Natural killer cell (primary cell): ENCODE measurements at regions of chr5 and their contacts with region 1.

Region 1: GRCh38 chr5:122327104-122327503 is 15.1 kb downstream of the SNCAIP start:
- DNase-seq: no peak
- ATAC-seq: no peak
- H3K4me3 ChIP-seq: no peak overlapping the region
- H3K4me3 Mint-ChIP-seq: no peak overlapping the region
- H3K27ac ChIP-seq: no peak overlapping the region
- H3K27ac Mint-ChIP-seq: no peak overlapping the region
- H3K4me1 ChIP-seq: no peaks in the 10 kb centered on the region
- H3K4me1 Mint-ChIP-seq: no peaks in the 10 kb centered on the region
- H3K27me3 ChIP-seq: no peaks in the 10 kb centered on the region
- H3K27me3 Mint-ChIP-seq: no peaks in the 10 kb centered on the region
- CTCF ChIP-seq: no peak

Region 2: GRCh38 chr5:122142480-122143164 is 184.5 kb before region 1 on chr5:
- intact Hi-C with region 1: no loop called
- DNase-seq: no peak
- ATAC-seq: no peak
- H3K4me3 ChIP-seq: no peak overlapping the region
- H3K4me3 Mint-ChIP-seq: no peak overlapping the region
- H3K27ac ChIP-seq: no peak overlapping the region
- H3K27ac Mint-ChIP-seq: no peak overlapping the region
- H3K4me1 ChIP-seq: no peaks in the 10 kb centered on the region
- H3K4me1 Mint-ChIP-seq: no peaks in the 10 kb centered on the region
- H3K27me3 ChIP-seq: no peaks in the 10 kb centered on the region
- H3K27me3 Mint-ChIP-seq: no peaks in the 10 kb centered on the region
- CTCF ChIP-seq: no peak

Region 3: GRCh38 chr5:122297587-122298298 is 29.4 kb before region 1 on chr5:
- intact Hi-C with region 1: loop called (anchors 2 kb)
- DNase-seq: no peak
- ATAC-seq: no peak
- H3K4me3 ChIP-seq: no peak overlapping the region
- H3K4me3 Mint-ChIP-seq: no peak overlapping the region
- H3K27ac ChIP-seq: no peak overlapping the region
- H3K27ac Mint-ChIP-seq: no peak overlapping the region
- H3K4me1 ChIP-seq: no peaks in the 10 kb centered on the region
- H3K4me1 Mint-ChIP-seq: no peaks in the 10 kb centered on the region
- H3K27me3 ChIP-seq: no peaks in the 10 kb centered on the region
- H3K27me3 Mint-ChIP-seq: no peaks in the 10 kb centered on the region
- CTCF ChIP-seq: no peak